Dendritic cell treated with granulocyte-macrophage colony-stimulating factor and Interleukin-4, amounts not matched to agents 40 ng/mL and 50 ng/mL, for 4 days (primary cell): ENCODE measurements at regions of chr7 and their contacts with region 1.

Region 1: GRCh38 chr7:41685684-41686083 is 17.2 kb downstream of the INHBA start:
- H3K4me3 Mint-ChIP-seq: no peak overlapping the region
- H3K27ac Mint-ChIP-seq: no peak overlapping the region
- H3K4me1 Mint-ChIP-seq: no peaks in the 10 kb centered on the region
- H3K27me3 Mint-ChIP-seq: no peaks in the 10 kb centered on the region

Region 2: GRCh38 chr7:40263752-40264390 is 1421.8 kb before region 1 on chr7:
- intact Hi-C with region 1: loop called (anchors 10 kb)
- H3K4me3 Mint-ChIP-seq: no peak overlapping the region
- H3K27ac Mint-ChIP-seq: no peak overlapping the region
- H3K4me1 Mint-ChIP-seq: peaks cover 9% of the 10 kb centered on the region
- H3K27me3 Mint-ChIP-seq: no peaks in the 10 kb centered on the region

Region 3: GRCh38 chr7:41328544-41328943 is 357.1 kb before region 1 on chr7:
- intact Hi-C with region 1: no loop called
- H3K4me3 Mint-ChIP-seq: no peak overlapping the region
- H3K27ac Mint-ChIP-seq: no peak overlapping the region
- H3K4me1 Mint-ChIP-seq: no peaks in the 10 kb centered on the region
- H3K27me3 Mint-ChIP-seq: no peaks in the 10 kb centered on the region